ENCODE measurements at regions of chr3 and their contacts with region 1.

Region 1: DNA sequence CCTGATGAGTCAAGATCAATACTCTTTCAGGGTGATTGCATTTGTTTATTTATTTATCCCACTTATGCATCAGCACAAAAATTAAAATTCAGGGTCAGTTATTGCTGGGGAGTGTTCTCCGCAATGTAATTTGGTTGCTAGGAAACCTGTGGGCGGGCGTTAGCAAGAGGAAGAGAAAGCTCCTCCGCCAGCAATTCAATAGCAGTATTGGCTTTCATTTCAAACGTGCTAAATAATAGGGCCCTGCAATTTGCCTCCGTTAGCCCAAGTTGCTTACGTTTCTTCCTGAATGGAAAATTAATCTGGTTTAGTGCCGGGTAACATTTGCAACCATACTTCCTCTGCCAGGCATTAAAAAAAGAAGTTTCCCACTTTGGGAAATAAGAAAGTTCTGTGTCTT is 35.5 kb upstream of the PLCL2 start:
- ATAC-seq: peak; percentile 44 to 97 (median 91)
- H3K4me3 ChIP-seq: peak overlapping the region in 2 of 5 donors; percentile 10 to 13
- H3K27ac ChIP-seq: no peak overlapping the region
- H3K4me1 ChIP-seq: peaks cover 14 to 15% of the 10 kb centered on the region in 2 donors

Region 2: DNA sequence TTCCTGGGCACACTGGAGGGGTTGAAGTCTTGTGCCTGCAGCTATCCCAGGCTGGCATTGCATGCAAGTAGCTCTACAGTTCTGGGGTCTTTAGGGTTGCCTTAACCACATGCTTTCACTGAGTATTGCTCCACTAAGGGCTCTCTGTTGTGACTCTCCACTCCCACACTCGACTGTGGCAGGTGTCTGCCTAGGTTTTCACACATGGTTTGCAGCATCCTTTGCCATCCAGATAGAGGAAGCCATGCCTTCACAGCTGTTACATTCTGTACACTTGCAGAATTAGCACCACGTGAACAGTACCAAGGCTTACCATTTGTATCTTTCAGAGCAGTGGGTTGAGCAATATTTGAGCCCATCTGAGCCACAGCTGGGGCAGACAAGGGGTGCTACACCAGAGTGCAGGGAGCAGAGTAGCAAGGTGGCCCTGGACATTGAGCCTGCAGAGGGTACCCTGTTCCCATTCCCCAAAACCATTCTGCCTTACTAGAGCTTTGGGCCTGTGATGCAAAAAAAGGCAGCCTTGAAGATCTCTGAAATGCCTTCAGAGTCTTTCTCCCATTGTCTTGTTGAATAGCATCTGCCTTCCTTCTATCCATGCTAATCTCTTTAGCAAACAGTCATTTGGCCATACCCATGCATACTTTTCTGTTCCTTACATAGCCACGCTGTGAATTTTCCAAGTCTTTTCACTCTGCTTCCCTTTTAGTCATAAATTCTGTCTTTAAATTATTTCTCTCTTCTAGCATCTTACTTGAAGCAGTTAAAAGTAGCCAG is 59.7 kb before region 1 on chr3:
- in situ Hi-C with region 1: no loop called
- ATAC-seq: no peak
- H3K4me3 ChIP-seq: no peak overlapping the region
- H3K27ac ChIP-seq: no peak overlapping the region
- H3K4me1 ChIP-seq: peaks cover 0 to 3% of the 10 kb centered on the region in 2 donors

Region 3: DNA sequence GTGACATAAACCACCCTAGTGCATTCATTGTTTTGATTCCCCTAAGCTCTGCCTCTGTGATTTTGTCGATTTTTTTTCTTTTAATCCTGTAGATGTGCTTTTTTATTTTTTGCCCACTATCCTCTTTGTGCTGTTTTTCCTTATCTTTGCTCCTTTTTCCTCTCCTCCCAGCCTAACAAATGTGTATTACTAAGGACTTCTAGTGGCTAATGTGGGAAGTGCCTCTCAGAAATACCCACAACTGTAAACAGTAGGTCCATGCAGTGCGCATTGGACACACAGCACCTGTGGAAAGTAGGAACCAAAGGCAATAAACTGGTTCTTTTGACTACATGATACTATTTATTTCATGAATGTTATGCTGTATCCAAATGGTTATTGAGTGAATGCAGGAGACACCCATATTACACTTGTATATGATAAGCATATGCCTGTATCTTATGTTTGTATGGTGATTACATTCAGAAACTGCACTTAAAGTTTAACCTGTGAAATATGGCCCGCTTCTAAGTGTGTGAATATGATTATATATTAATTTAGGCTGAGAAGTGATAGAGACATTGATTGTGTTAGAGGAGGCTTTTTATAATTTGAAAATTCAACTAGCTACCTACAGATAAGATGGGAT is 183.3 kb after region 1 on chr3:
- in situ Hi-C with region 1: loop called in 1 of 9 experiments (anchors 25 kb)
- ATAC-seq: peak in 6 of 8 experiments; percentile 42 to 86 (median 66)
- H3K4me3 ChIP-seq: no peak overlapping the region
- H3K27ac ChIP-seq: no peak overlapping the region
- H3K4me1 ChIP-seq: peaks cover 4 to 7% of the 10 kb centered on the region in 2 donors

Region 4: DNA sequence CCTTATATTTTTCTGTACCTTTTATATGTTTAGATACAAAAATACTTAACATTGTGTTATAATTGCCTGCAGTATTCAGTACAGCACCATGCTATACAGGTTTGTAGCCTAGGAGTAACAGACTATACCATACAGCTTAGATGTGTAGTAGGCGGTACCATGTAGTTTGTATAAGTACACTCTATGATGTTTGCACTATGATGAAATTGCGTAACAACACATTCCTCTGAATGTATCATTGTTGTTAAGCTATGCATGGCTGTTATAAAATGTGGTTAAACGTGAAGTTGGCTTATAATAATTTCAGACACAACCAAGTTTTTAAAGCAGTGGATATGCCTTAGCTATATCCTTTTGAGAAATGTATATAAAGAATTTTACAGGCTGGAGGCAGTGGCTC is 363.9 kb after region 1 on chr3:
- in situ Hi-C with region 1: loop called in 1 of 9 experiments (anchors 25 kb)
- ATAC-seq: no peak
- H3K4me3 ChIP-seq: no peak overlapping the region
- H3K27ac ChIP-seq: no peak overlapping the region
- H3K4me1 ChIP-seq: no peaks in the 10 kb centered on the region